Left cardiac atrium (tissue), 4 donors: ENCODE measurements at regions of chr6 and their contacts with region 1.

Region 1: GRCh38 chr6:132483779-132484679 is 28.9 kb downstream of the STX7 start:
- DNase-seq: no peak
- ATAC-seq: peak; percentile 65 to 79

Region 2: GRCh38 chr6:132279592-132280139 is 204.4 kb before region 1 on chr6:
- intact Hi-C with region 1: loop called in 1 of 2 experiments (anchors 1 kb)
- DNase-seq: peak; percentile 71
- ATAC-seq: peak; percentile 72 to 82

Region 3: DNA sequence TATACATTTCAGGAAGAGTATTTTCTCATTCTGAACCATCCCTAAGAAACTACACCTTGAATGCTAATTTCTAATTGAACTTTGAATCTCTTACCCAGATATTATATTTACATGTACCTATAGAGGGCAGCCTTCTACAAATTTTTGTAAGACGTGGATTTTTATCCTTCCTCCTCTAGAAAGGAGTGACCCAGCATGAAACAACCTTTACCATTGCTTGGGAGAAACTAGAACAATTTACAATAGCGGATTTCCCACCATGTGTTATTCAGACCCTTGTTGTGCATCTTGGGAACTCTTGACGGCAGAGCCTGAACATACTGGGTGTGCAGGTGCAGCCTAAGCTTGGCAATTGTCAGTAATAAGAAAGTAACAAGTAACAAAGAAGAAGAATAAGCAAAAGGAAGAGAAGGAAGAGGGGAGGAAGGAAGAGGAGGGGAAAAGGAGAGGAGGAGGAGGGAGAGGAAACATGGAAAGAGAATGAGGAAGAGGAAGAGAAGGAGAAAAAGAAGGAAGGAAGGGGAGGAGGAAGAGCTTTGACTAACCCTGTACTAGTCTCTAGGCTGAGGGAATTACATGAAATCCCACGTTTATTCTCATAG is 185.8 kb after region 1 on chr6:
- intact Hi-C with region 1: no loop called
- DNase-seq: no peak
- ATAC-seq: peak; percentile 73 to 85